ENCODE measurements at regions of chr20 and their contacts with region 1.

Region 1: GRCh38 chr20:1802385-1803060 is 92.7 kb upstream of the SIRPA start:
- DNase-seq: peak in 1 of 2 donors; percentile 23
- ATAC-seq: peak; percentile 46 to 72
- H3K4me3 ChIP-seq: peak overlapping the region; percentile 50 to 63 (median 58)
- H3K27ac ChIP-seq: peak overlapping the region in 1 of 4 donors; percentile 63
- H3K4me1 ChIP-seq: peaks cover 12 to 23% of the 10 kb centered on the region in 2 donors
- H3K27me3 ChIP-seq: no peaks in the 10 kb centered on the region
- CTCF ChIP-seq: peak; percentile 20 to 74 (median 59)
- POLR2A ChIP-seq: no peak

Region 2: GRCh38 chr20:1860446-1860845 is 57.9 kb after region 1 on chr20:
- in situ Hi-C with region 1: no loop called
- intact Hi-C with region 1: no loop called
- DNase-seq: no peak
- ATAC-seq: no peak
- H3K4me3 ChIP-seq: no peak overlapping the region
- H3K27ac ChIP-seq: no peak overlapping the region
- H3K4me1 ChIP-seq: peaks cover 0 to 5% of the 10 kb centered on the region in 2 donors
- H3K27me3 ChIP-seq: no peaks in the 10 kb centered on the region
- CTCF ChIP-seq: no peak
- POLR2A ChIP-seq: no peak

Region 3: DNA sequence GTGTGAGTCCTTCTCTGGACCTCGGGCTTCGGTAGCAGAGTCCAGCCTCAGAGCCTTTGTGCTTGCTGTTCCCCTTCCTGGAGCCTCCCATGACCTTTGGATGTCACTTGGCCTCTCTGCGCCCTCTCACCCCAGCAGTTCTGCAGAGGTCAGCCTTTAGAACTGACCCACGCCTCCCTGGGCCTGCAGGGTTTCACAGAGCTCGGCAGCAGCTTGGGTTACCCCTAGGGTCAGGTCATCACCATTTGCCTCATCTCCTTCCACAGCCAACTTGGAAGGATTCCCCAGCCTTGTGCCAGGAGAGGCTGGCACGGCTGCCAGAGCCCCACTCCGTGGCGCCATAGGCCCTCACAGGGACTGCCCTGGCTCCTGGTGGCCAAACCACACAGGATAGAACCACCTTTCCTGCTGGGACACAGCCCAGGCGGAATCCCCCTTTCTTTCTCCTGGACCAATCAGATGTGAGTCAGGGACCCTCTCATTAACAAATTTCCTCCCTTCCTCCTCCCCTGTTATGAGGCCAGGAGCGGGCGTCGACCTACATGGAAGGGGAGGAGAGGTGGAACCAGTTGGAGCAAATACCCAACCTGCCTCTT is 78.8 kb after region 1 on chr20:
- in situ Hi-C with region 1: no loop called
- intact Hi-C with region 1: loop called (anchors 1 kb)
- DNase-seq: peak in 1 of 2 donors; percentile 53
- ATAC-seq: peak; percentile 20 to 84
- H3K4me3 ChIP-seq: no peak overlapping the region
- H3K27ac ChIP-seq: no peak overlapping the region
- H3K4me1 ChIP-seq: peaks cover 10 to 18% of the 10 kb centered on the region in 2 donors
- H3K27me3 ChIP-seq: no peaks in the 10 kb centered on the region
- CTCF ChIP-seq: no peak
- POLR2A ChIP-seq: no peak

Region 4: GRCh38 chr20:1894951-1895673 is 92.6 kb after region 1 on chr20 and contains the start of gene SIRPA:
- in situ Hi-C with region 1: no loop called
- intact Hi-C with region 1: loop called (anchors 2 kb)
- DNase-seq: peak; percentile 37 to 50
- ATAC-seq: peak; percentile 77
- H3K4me3 ChIP-seq: peak within 1 kb of the TSS; percentile 65 to 94 (median 73)
- H3K27ac ChIP-seq: peak within 1 kb of the TSS; percentile 79 to 81 (median 80)
- H3K4me1 ChIP-seq: peaks cover 0 to 21% of the 10 kb centered on the region in 2 donors
- H3K27me3 ChIP-seq: no peaks in the 10 kb centered on the region
- CTCF ChIP-seq: no peak
- POLR2A ChIP-seq: peak; percentile 57 to 67
- total RNA-seq, gene SIRPA: 14.6 to 62.0 (median 20.6) TPM

Region 5: DNA sequence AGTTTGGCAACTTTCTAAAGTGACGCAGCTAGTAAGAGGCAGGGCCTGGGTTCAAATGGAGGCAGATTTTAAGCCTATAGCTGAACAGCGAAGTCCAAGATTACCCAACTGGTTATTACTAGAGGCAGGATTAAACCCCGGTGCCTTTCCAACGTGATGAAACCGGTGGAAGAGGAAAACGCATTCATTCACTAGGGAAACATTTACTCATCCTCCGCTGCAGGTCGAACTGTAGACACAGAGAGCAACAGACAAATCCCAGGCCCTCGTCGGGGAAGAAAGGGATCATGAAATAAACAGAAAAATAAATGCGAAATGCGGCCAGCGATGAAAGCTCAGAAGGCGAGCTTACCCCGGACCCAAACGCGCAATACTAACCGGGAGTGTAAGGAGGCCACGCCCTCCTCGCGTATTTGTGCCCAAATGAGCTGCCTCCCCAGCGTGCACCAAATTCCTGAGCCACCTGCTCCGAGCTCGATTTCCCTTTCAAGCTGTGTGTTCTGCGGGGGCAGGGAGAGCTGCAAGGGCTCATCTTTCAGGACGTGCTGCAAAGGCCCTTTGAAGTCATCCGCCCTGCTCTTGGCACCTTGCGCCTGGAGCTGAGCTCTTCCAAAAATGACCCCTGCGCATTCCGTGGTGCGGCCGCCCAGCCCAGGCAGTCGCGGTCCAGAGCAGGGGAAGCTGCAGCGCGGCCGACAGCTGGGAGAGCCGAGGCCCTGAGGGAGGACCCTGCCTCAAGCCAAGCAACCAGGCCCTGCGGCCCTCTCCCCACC is 144.4 kb after region 1 on chr20:
- in situ Hi-C with region 1: loop called in 1 of 4 experiments (anchors 25 kb)
- intact Hi-C with region 1: loop called (anchors 5 kb)
- DNase-seq: peak; percentile 56 to 80
- ATAC-seq: peak; percentile 67
- H3K4me3 ChIP-seq: peak overlapping the region; percentile 32 to 40 (median 37)
- H3K27ac ChIP-seq: peak overlapping the region; percentile 52 to 77 (median 68)
- H3K4me1 ChIP-seq: peaks cover 38 to 44% of the 10 kb centered on the region in 2 donors
- H3K27me3 ChIP-seq: no peaks in the 10 kb centered on the region
- CTCF ChIP-seq: no peak
- POLR2A ChIP-seq: peak in 1 of 2 donors; percentile 30

Region 6: GRCh38 chr20:1965520-1966351 is 163.2 kb after region 1 on chr20:
- in situ Hi-C with region 1: loop called in 1 of 4 experiments (anchors 10 kb)
- intact Hi-C with region 1: no loop called
- DNase-seq: peak in 1 of 2 donors; percentile 52
- ATAC-seq: peak; percentile 50 to 66
- H3K4me3 ChIP-seq: peak overlapping the region in 1 of 4 donors; percentile 1
- H3K27ac ChIP-seq: no peak overlapping the region
- H3K4me1 ChIP-seq: peaks cover 6% of the 10 kb centered on the region in 2 donors
- H3K27me3 ChIP-seq: no peaks in the 10 kb centered on the region
- CTCF ChIP-seq: peak; percentile 72 to 93 (median 91)
- POLR2A ChIP-seq: no peak